ENCODE measurements at regions of chr6 and their contacts with region 1.

Region 1: DNA sequence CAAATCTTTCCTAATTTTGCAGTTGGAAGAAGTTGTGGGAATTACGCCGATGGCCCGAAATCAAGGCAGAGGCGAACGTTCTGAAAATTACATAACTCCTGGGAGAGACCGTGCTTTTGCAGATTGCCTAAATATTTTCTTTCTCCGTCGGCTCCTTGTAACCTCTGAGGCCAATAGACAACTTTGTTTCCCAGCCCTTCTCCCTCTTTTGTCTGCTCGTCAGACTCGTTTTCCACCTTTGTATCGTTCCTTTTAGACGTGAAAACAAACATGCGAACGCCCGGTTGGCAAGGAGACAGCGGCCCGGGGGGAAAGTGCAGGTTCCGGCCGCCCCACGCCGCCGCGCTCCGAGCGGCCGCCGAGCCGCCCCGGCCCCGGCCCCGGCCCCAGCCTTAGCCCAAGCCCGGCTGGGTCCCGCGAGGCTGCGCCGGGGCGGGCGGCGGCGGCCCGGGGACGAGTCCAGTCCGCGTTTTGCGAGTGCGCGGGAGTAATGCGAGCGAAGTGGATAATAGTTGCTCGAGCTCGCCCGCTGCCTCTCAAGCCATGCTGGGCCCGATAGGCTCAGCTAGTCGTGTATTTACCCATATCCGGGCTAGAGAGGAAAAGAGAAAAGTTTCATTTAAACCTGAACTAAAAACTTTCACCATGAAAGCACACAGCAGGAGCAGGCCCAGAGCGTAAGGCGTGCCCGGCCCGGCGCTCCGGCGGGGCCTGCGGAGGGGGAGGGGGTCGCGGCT is at the start of gene ARID1B:
- DNase-seq: peak; percentile 69 to 92 (median 76)
- ATAC-seq: peak; percentile 55
- H3K4me3 ChIP-seq: peak within 1 kb of the TSS; percentile 89
- H3K4me3 Mint-ChIP-seq: peak within 1 kb of the TSS; percentile 95
- H3K27ac ChIP-seq: peak within 1 kb of the TSS; percentile 83 to 90
- H3K27ac Mint-ChIP-seq: peak within 1 kb of the TSS; percentile 97
- H3K4me1 ChIP-seq: peaks cover 12% of the 10 kb centered on the region
- H3K4me1 Mint-ChIP-seq: peaks cover 46% of the 10 kb centered on the region
- H3K27me3 ChIP-seq: no peaks in the 10 kb centered on the region
- H3K27me3 Mint-ChIP-seq: no peaks in the 10 kb centered on the region
- CTCF ChIP-seq: no peak
- total RNA-seq, gene ARID1B: 120 to 125 TPM

Region 2: DNA sequence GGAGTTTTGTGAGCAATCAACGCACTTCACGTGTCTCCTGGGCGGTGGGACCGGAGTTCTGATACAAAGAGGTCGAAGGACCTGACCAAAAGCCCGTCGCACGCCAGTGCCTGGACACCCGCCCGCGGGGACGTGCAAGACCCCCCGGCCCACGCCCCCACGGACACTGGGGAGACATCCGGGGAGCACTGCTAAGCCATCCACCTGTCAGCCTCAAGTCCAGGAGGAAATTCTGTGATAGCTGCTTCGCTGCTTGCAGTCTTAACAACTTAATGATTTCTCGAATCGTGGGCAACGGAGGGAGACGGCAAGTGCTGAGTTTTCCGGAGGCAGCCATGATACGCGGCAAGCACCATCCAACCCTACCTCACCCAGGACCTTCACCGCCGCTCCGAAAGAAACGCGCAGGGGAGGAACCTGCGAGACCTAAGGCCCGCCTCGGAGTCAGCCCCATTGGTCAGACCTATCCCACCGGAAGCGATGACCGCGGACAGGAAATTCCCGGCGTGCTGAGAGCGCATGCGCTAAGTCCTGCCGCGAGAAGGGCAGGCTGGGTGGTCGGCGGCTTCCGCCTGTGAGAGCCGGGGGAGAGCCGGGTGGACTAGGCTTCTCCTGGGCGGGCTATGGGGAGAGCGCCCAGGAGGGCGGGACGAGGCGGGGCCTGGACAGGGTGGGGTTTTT is 1462.8 kb before region 1 on chr6 and contains the start of gene TFB1M:
- CTCF ChIA-PET with region 1: no interaction called
- POLR2A ChIA-PET with region 1: interaction called, 3 read pairs
- intact Hi-C with region 1: loop called (anchors 5 to 10 kb)
- DNase-seq: peak; percentile 88 to 99 (median 96)
- ATAC-seq: peak; percentile 94
- H3K4me3 ChIP-seq: peak within 1 kb of the TSS; percentile 74
- H3K4me3 Mint-ChIP-seq: peak within 1 kb of the TSS; percentile 97
- H3K27ac ChIP-seq: peak within 1 kb of the TSS; percentile 84 to 92
- H3K27ac Mint-ChIP-seq: peak within 1 kb of the TSS; percentile 91
- H3K4me1 ChIP-seq: no peaks in the 10 kb centered on the region
- H3K4me1 Mint-ChIP-seq: peaks cover 48% of the 10 kb centered on the region
- H3K27me3 ChIP-seq: no peaks in the 10 kb centered on the region
- H3K27me3 Mint-ChIP-seq: no peaks in the 10 kb centered on the region
- CTCF ChIP-seq: no peak
- total RNA-seq, gene TFB1M: 7.2 to 9.2 TPM

Region 3: GRCh38 chr6:156564127-156564806 is 212.7 kb before region 1 on chr6:
- CTCF ChIA-PET with region 1: no interaction called
- POLR2A ChIA-PET with region 1: interaction called, 4 read pairs
- intact Hi-C with region 1: loop called in 1 of 2 experiments (anchors 5 kb)
- DNase-seq: peak; percentile 47 to 85 (median 74)
- ATAC-seq: peak; percentile 94
- H3K4me3 ChIP-seq: no peak overlapping the region
- H3K4me3 Mint-ChIP-seq: no peak overlapping the region
- H3K27ac ChIP-seq: no peak overlapping the region
- H3K27ac Mint-ChIP-seq: no peak overlapping the region
- H3K4me1 ChIP-seq: peaks cover 6% of the 10 kb centered on the region
- H3K4me1 Mint-ChIP-seq: peaks cover 4% of the 10 kb centered on the region
- H3K27me3 ChIP-seq: no peaks in the 10 kb centered on the region
- H3K27me3 Mint-ChIP-seq: peaks cover 16% of the 10 kb centered on the region
- CTCF ChIP-seq: peak; percentile 89

Region 4: GRCh38 chr6:156589281-156589680 is 187.7 kb before region 1 on chr6:
- CTCF ChIA-PET with region 1: no interaction called
- POLR2A ChIA-PET with region 1: no interaction called
- intact Hi-C with region 1: no loop called
- DNase-seq: no peak
- ATAC-seq: no peak
- H3K4me3 ChIP-seq: no peak overlapping the region
- H3K4me3 Mint-ChIP-seq: no peak overlapping the region
- H3K27ac ChIP-seq: no peak overlapping the region
- H3K27ac Mint-ChIP-seq: no peak overlapping the region
- H3K4me1 ChIP-seq: no peaks in the 10 kb centered on the region
- H3K4me1 Mint-ChIP-seq: no peaks in the 10 kb centered on the region
- H3K27me3 ChIP-seq: peaks cover 0 to 3% of the 10 kb centered on the region in 2 experiments
- H3K27me3 Mint-ChIP-seq: no peaks in the 10 kb centered on the region
- CTCF ChIP-seq: no peak

Region 5: GRCh38 chr6:156719720-156720563 is 57.1 kb before region 1 on chr6:
- CTCF ChIA-PET with region 1: interaction called, 5 read pairs
- POLR2A ChIA-PET with region 1: interaction called, 54 read pairs
- intact Hi-C with region 1: loop called (anchors 1 to 5 kb)
- DNase-seq: peak; percentile 51 to 90 (median 79)
- ATAC-seq: peak; percentile 90
- H3K4me3 ChIP-seq: peak overlapping the region; percentile 62
- H3K4me3 Mint-ChIP-seq: peak overlapping the region; percentile 91
- H3K27ac ChIP-seq: peak overlapping the region; percentile 51 to 52
- H3K27ac Mint-ChIP-seq: peak overlapping the region; percentile 97
- H3K4me1 ChIP-seq: peaks cover 15% of the 10 kb centered on the region
- H3K4me1 Mint-ChIP-seq: peaks cover 26% of the 10 kb centered on the region
- H3K27me3 ChIP-seq: no peaks in the 10 kb centered on the region
- H3K27me3 Mint-ChIP-seq: no peaks in the 10 kb centered on the region
- CTCF ChIP-seq: no peak

Region 6: GRCh38 chr6:156791320-156791850 is 14.4 kb after region 1 on chr6:
- CTCF ChIA-PET with region 1: interaction called, 12 read pairs
- POLR2A ChIA-PET with region 1: interaction called, 23 read pairs
- intact Hi-C with region 1: loop called in 1 of 2 experiments (anchors 1 kb)
- DNase-seq: peak in 5 of 14 experiments; percentile 32 to 81 (median 47)
- ATAC-seq: peak; percentile 92
- H3K4me3 ChIP-seq: no peak overlapping the region
- H3K4me3 Mint-ChIP-seq: peak overlapping the region; percentile 63
- H3K27ac ChIP-seq: no peak overlapping the region
- H3K27ac Mint-ChIP-seq: peak overlapping the region; percentile 42
- H3K4me1 ChIP-seq: peaks cover 55% of the 10 kb centered on the region
- H3K4me1 Mint-ChIP-seq: peaks cover 100% of the 10 kb centered on the region
- H3K27me3 ChIP-seq: no peaks in the 10 kb centered on the region
- H3K27me3 Mint-ChIP-seq: no peaks in the 10 kb centered on the region
- CTCF ChIP-seq: no peak

Region 7: DNA sequence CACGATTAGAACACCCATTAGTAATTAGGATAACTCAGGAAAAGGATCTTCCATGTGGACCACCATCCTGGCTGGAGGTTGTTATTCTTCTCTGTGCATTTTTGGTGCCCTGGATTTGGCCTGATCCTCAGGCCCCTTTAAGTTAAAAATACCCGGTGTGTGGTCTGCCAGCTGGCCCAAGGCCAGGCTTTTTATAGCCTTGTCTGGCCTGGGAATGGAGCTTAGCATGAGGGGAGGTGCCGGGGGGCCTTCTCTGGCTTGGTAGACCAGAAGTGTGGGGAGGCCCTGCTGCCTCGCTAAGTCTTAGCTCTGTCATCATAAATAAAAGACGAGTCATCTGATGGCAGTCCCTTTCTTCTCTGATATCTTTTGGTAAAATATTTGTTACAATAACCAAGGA is 71.5 kb after region 1 on chr6:
- CTCF ChIA-PET with region 1: no interaction called
- POLR2A ChIA-PET with region 1: interaction called, 4 read pairs
- intact Hi-C with region 1: loop called in 1 of 2 experiments (anchors 5 kb)
- DNase-seq: no peak
- ATAC-seq: no peak
- H3K4me3 ChIP-seq: no peak overlapping the region
- H3K4me3 Mint-ChIP-seq: no peak overlapping the region
- H3K27ac ChIP-seq: no peak overlapping the region
- H3K27ac Mint-ChIP-seq: peak overlapping the region; percentile 8
- H3K4me1 ChIP-seq: peaks cover 29% of the 10 kb centered on the region
- H3K4me1 Mint-ChIP-seq: peaks cover 98% of the 10 kb centered on the region
- H3K27me3 ChIP-seq: no peaks in the 10 kb centered on the region
- H3K27me3 Mint-ChIP-seq: no peaks in the 10 kb centered on the region
- CTCF ChIP-seq: no peak

Region 8: GRCh38 chr6:157274471-157275226 is 497.6 kb after region 1 on chr6:
- CTCF ChIA-PET with region 1: no interaction called
- POLR2A ChIA-PET with region 1: interaction called, 4 read pairs
- intact Hi-C with region 1: loop called in 1 of 2 experiments (anchors 2 kb)
- DNase-seq: peak; percentile 67 to 94 (median 78)
- ATAC-seq: peak; percentile 83
- H3K4me3 ChIP-seq: peak overlapping the region; percentile 74
- H3K4me3 Mint-ChIP-seq: peak overlapping the region; percentile 97
- H3K27ac ChIP-seq: peak overlapping the region; percentile 70 to 79
- H3K27ac Mint-ChIP-seq: peak overlapping the region; percentile 98
- H3K4me1 ChIP-seq: peaks cover 17% of the 10 kb centered on the region
- H3K4me1 Mint-ChIP-seq: peaks cover 13% of the 10 kb centered on the region
- H3K27me3 ChIP-seq: no peaks in the 10 kb centered on the region
- H3K27me3 Mint-ChIP-seq: no peaks in the 10 kb centered on the region
- CTCF ChIP-seq: peak; percentile 56

Measured in CD4-positive, alpha-beta T cell (primary cell).